CD14-positive monocyte (primary cell): ENCODE measurements at regions of chr2 and their contacts with region 1.

Region 1: DNA sequence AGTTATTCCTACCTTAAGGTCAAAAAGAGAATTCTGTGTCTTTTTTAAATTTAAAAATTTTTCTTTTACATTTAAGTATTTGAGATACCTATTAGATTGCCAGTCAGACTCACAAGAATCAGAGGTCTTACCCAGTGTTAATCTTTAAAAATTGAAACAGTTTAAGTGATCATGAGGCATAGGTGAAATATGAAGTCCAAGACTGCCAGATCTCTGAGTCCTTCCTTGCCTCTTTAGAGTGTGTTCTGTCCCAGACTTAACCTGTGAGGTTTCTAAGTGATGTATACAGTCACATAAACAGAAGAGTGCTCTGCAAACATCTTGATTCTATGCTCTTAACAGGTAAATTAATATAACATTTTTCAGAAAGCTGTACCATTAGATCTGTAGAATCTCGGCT is 40.6 kb downstream of the ACTR3 start:
- DNase-seq: no peak
- H3K4me3 ChIP-seq: no peak overlapping the region
- H3K4me3 Mint-ChIP-seq: no peak overlapping the region
- H3K27ac ChIP-seq: no peak overlapping the region
- H3K27ac Mint-ChIP-seq: no peak overlapping the region
- H3K4me1 ChIP-seq: no peaks in the 10 kb centered on the region
- H3K4me1 Mint-ChIP-seq: no peaks in the 10 kb centered on the region
- H3K27me3 ChIP-seq: no peaks in the 10 kb centered on the region
- H3K27me3 Mint-ChIP-seq: no peaks in the 10 kb centered on the region
- CTCF ChIP-seq: no peak

Region 2: GRCh38 chr2:113739849-113740248 is 190.6 kb before region 1 on chr2:
- intact Hi-C with region 1: loop called in 1 of 2 experiments (anchors 10 kb)
- DNase-seq: peak in 1 of 3 donors; percentile 11
- H3K4me3 ChIP-seq: no peak overlapping the region
- H3K4me3 Mint-ChIP-seq: no peak overlapping the region
- H3K27ac ChIP-seq: no peak overlapping the region
- H3K27ac Mint-ChIP-seq: peak overlapping the region in 1 of 7 donors; percentile 10
- H3K4me1 ChIP-seq: no peaks in the 10 kb centered on the region
- H3K4me1 Mint-ChIP-seq: no peaks in the 10 kb centered on the region
- H3K27me3 ChIP-seq: no peaks in the 10 kb centered on the region
- H3K27me3 Mint-ChIP-seq: no peaks in the 10 kb centered on the region
- CTCF ChIP-seq: no peak

Region 3: GRCh38 chr2:113762377-113763118 is 167.9 kb before region 1 on chr2:
- intact Hi-C with region 1: loop called in 1 of 2 experiments (anchors 2 kb)
- DNase-seq: no peak
- H3K4me3 ChIP-seq: no peak overlapping the region
- H3K4me3 Mint-ChIP-seq: no peak overlapping the region
- H3K27ac ChIP-seq: no peak overlapping the region
- H3K27ac Mint-ChIP-seq: no peak overlapping the region
- H3K4me1 ChIP-seq: peaks cover 3% of the 10 kb centered on the region in 2 donors
- H3K4me1 Mint-ChIP-seq: peaks cover 3% of the 10 kb centered on the region
- H3K27me3 ChIP-seq: no peaks in the 10 kb centered on the region
- H3K27me3 Mint-ChIP-seq: peaks cover 0 to 6% (median 0%) of the 10 kb centered on the region in 3 donors
- CTCF ChIP-seq: no peak

Region 4: GRCh38 chr2:113889471-113890252 is 40.8 kb before region 1 on chr2 and contains the start of gene ACTR3:
- intact Hi-C with region 1: loop called in 1 of 2 experiments (anchors 5 kb)
- DNase-seq: peak; percentile 98 to 100 (median 99)
- H3K4me3 ChIP-seq: peak within 1 kb of the TSS; percentile 89 to 96 (median 91)
- H3K4me3 Mint-ChIP-seq: peak within 1 kb of the TSS; percentile 96 to 100
- H3K27ac ChIP-seq: peak within 1 kb of the TSS; percentile 95 to 98
- H3K27ac Mint-ChIP-seq: peak within 1 kb of the TSS; percentile 96 to 100 (median 99)
- H3K4me1 ChIP-seq: peaks cover 69 to 77% of the 10 kb centered on the region in 2 donors
- H3K4me1 Mint-ChIP-seq: peaks cover 70% of the 10 kb centered on the region
- H3K27me3 ChIP-seq: no peaks in the 10 kb centered on the region
- H3K27me3 Mint-ChIP-seq: peaks cover 0 to 2% (median 0%) of the 10 kb centered on the region in 3 donors
- CTCF ChIP-seq: no peak
- polyA plus RNA-seq, gene ACTR3: 103 to 557 (median 464) TPM

Region 5: GRCh38 chr2:114108824-114109416 is 178.5 kb after region 1 on chr2:
- intact Hi-C with region 1: no loop called
- DNase-seq: no peak
- H3K4me3 ChIP-seq: no peak overlapping the region
- H3K4me3 Mint-ChIP-seq: no peak overlapping the region
- H3K27ac ChIP-seq: no peak overlapping the region
- H3K27ac Mint-ChIP-seq: no peak overlapping the region
- H3K4me1 ChIP-seq: no peaks in the 10 kb centered on the region
- H3K4me1 Mint-ChIP-seq: no peaks in the 10 kb centered on the region
- H3K27me3 ChIP-seq: no peaks in the 10 kb centered on the region
- H3K27me3 Mint-ChIP-seq: peaks cover 0 to 3% (median 0%) of the 10 kb centered on the region in 3 donors
- CTCF ChIP-seq: no peak